ENCODE measurements at regions of chr16 and their contacts with region 1.

Region 1: GRCh38 chr16:53945996-53946395 is 242.0 kb downstream of the FTO start:
- DNase-seq: peak; percentile 58
- H3K4me3 ChIP-seq: no peak overlapping the region
- H3K27ac ChIP-seq: no peak overlapping the region
- H3K4me1 ChIP-seq: no peaks in the 10 kb centered on the region
- H3K27me3 ChIP-seq: no peaks in the 10 kb centered on the region
- CTCF ChIP-seq: peak; percentile 55 to 69
- POLR2A ChIP-seq: no peak

Region 2: GRCh38 chr16:54286090-54286993 is 340.3 kb after region 1 on chr16 and contains the start of gene IRX3:
- CTCF ChIA-PET with region 1: interaction called, 6 read pairs
- POLR2A ChIA-PET with region 1: no interaction called
- dilution Hi-C with region 1: no loop called
- intact Hi-C with region 1: loop called (anchors 5 kb)
- DNase-seq: peak; percentile 22
- H3K4me3 ChIP-seq: peak within 1 kb of the TSS; percentile 37 to 50 (median 42)
- H3K27ac ChIP-seq: no peak within 1 kb of the TSS
- H3K4me1 ChIP-seq: peaks cover 8% of the 10 kb centered on the region
- H3K27me3 ChIP-seq: peaks cover 76 to 94% of the 10 kb centered on the region in 2 experiments
- CTCF ChIP-seq: no peak
- POLR2A ChIP-seq: no peak
- total RNA-seq, gene IRX3: not detected in 2 replicates

Region 3: GRCh38 chr16:54936979-54937670 is 991.1 kb after region 1 on chr16:
- CTCF ChIA-PET with region 1: no interaction called
- POLR2A ChIA-PET with region 1: no interaction called
- dilution Hi-C with region 1: no loop called
- intact Hi-C with region 1: loop called (anchors 5 kb)
- DNase-seq: peak; percentile 24
- H3K4me3 ChIP-seq: no peak overlapping the region
- H3K27ac ChIP-seq: no peak overlapping the region
- H3K4me1 ChIP-seq: peaks cover 4% of the 10 kb centered on the region
- H3K27me3 ChIP-seq: peaks cover 87 to 95% of the 10 kb centered on the region in 2 experiments
- CTCF ChIP-seq: peak; percentile 61 to 66
- POLR2A ChIP-seq: no peak

Region 4: DNA sequence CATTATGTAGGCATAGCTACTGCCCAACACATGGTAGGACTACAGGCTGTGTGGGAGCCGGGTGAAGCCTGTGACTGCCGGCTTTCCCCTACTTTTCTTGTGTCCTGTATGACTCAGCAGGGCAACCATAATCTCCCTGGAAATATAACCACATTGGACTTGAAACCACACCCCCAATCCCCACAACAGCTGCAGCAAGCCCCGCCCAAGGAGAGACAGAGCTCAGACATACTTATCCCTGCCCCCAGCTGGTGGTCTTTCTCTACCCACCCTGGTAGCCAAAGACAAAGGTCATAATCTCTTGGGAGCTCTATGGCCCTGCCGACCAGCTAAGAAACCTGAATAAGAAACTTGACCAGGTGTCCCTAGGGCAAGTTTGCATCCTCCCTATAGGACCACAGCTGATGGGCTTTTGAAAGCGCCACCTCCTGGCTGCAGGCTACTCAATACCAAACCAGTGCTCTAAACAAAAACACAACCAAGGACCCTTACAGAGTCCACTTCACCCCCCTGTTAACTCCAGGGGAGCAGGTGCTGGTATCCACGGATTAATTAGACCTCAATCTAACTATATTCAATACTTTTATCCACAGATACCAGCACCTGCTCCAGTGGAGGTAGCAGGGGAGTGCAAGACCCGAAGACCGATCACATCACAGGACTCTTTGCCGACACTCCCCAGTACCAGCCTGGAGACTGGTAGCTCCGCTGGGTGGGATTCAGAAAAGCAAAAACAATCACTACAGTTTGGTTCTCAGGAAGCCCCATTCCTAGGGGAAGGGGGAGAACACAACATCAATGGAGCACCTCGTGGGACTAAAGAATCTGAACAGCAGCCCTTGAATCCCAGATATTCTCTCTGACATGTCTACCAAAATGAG is 1075.8 kb after region 1 on chr16:
- CTCF ChIA-PET with region 1: no interaction called
- POLR2A ChIA-PET with region 1: no interaction called
- dilution Hi-C with region 1: no loop called
- intact Hi-C with region 1: loop called (anchors 5 kb)
- DNase-seq: no peak
- H3K4me3 ChIP-seq: no peak overlapping the region
- H3K27ac ChIP-seq: no peak overlapping the region
- H3K4me1 ChIP-seq: no peaks in the 10 kb centered on the region
- H3K27me3 ChIP-seq: no peaks in the 10 kb centered on the region
- CTCF ChIP-seq: no peak
- POLR2A ChIP-seq: no peak

Region 5: GRCh38 chr16:55257966-55258613 is 1312.1 kb after region 1 on chr16:
- CTCF ChIA-PET with region 1: interaction called, 9 read pairs
- POLR2A ChIA-PET with region 1: no interaction called
- dilution Hi-C with region 1: no loop called
- intact Hi-C with region 1: loop called (anchors 1 kb)
- DNase-seq: peak; percentile 53
- H3K4me3 ChIP-seq: no peak overlapping the region
- H3K27ac ChIP-seq: no peak overlapping the region
- H3K4me1 ChIP-seq: no peaks in the 10 kb centered on the region
- H3K27me3 ChIP-seq: no peaks in the 10 kb centered on the region
- CTCF ChIP-seq: peak; percentile 74 to 76
- POLR2A ChIP-seq: no peak